AG04449 (cell line): ENCODE measurements at regions of chr1 and their contacts with region 1.

Region 1: DNA sequence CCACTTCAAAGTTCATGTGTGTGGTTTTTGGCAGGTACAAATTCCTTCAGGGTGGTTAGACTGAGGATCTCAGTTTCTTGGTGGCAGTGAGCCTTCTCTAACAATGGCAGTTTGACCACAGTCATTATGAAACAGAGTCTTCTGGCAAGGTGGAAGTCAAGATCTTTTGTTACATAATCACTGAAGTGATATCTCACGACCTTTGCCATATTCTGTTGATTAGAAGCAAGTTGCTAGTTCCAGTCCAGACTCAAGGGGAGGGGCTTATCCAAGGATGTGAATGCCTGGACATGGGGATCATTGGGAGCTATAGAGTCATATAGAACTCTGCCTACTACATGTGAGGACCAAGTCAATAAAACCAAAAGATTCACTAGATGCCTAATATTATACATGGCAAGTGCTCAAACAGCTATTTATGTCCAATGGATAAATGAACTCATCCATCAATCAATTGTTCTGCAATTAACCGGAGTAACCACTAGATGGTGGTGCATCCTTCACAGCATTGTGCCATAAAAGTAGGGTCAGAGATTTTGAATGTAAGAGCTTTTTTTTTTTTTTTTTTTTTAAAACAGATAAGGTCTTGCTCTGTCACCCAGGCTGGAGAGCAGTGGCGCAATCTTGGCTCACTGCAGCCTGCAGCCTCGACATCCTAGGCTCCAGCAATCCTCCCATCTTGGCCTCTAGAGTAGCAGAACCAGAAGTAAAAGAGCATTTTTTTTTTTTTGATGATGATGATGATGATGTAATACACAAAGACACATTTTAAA is 131.9 kb downstream of the CRB1 start:
- DNase-seq: no peak
- H3K4me3 ChIP-seq: no peak overlapping the region
- CTCF ChIP-seq: peak; percentile 51

Region 2: DNA sequence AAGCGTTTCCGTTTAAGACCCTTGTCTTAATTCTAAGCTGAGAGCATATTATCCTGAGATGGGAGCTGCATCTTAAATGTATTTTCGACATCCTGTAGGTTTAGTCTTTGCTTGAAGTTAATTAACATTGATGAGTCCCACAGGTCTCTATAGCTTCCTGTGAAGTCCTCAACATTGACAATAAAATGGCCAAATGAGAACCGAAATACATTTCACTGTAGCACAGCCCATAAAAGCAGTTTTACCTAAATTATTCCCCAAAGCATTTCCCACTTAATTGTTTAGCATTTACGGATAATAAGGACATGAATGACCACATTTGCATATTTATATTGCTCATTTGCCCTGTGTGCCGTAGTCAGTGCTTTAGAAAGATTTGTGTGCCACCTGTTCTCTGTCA is 15.5 kb before region 1 on chr1:
- CTCF ChIA-PET with region 1: interaction called, 30 read pairs
- POLR2A ChIA-PET with region 1: no interaction called
- DNase-seq: no peak
- H3K4me3 ChIP-seq: no peak overlapping the region
- CTCF ChIP-seq: no peak

Region 3: GRCh38 chr1:197413564-197413963 is 13.6 kb after region 1 on chr1:
- CTCF ChIA-PET with region 1: interaction called, 11 read pairs
- POLR2A ChIA-PET with region 1: no interaction called
- DNase-seq: no peak
- H3K4me3 ChIP-seq: no peak overlapping the region
- CTCF ChIP-seq: no peak